CD14-positive monocyte (primary cell): ENCODE measurements at regions of chr12 and their contacts with region 1.

Region 1: GRCh38 chr12:14629832-14630710 is 62.4 kb upstream of the PLBD1 start:
- DNase-seq: peak; percentile 42 to 73 (median 65)
- H3K4me3 ChIP-seq: no peak overlapping the region
- H3K4me3 Mint-ChIP-seq: no peak overlapping the region
- H3K27ac ChIP-seq: no peak overlapping the region
- H3K27ac Mint-ChIP-seq: no peak overlapping the region
- H3K4me1 ChIP-seq: no peaks in the 10 kb centered on the region
- H3K4me1 Mint-ChIP-seq: peaks cover 4% of the 10 kb centered on the region
- H3K27me3 ChIP-seq: no peaks in the 10 kb centered on the region
- H3K27me3 Mint-ChIP-seq: peaks cover 0 to 7% (median 1%) of the 10 kb centered on the region in 3 donors
- CTCF ChIP-seq: peak; percentile 97

Region 2: DNA sequence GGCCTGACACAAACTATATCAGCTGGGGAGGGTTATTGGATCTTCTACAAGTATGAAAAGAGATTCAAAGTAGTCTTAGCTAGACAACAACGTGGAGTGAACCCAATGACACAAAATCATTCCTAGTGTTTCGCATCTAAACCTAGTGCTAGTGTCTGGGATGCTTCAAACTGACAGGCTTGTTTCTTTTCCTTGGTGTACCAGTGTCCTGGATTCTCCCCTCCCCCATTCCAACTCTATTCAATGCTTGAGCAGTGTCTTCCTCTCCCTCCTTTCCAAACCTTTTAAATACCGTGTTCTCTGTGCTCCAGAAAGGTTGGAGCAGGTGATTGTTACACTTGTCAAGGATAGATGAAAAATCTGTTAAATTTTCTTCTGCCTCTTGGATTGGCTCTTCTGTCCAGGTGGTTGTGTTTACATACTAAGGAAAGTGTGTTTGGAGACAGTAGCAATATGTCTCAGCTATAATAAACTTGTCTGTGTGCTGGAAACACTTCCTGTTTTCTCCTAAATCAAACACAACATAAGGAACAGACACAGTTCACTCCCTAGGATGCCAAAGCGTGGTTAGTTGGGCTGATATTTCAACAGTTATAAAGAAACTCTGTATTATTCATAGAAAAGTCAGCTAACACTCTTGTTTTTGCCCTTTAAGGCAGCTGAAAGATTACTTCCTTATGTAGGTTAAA is 80.7 kb after region 1 on chr12:
- intact Hi-C with region 1: loop called (anchors 5 kb)
- DNase-seq: no peak
- H3K4me3 ChIP-seq: no peak overlapping the region
- H3K4me3 Mint-ChIP-seq: no peak overlapping the region
- H3K27ac ChIP-seq: no peak overlapping the region
- H3K27ac Mint-ChIP-seq: no peak overlapping the region
- H3K4me1 ChIP-seq: no peaks in the 10 kb centered on the region
- H3K4me1 Mint-ChIP-seq: peaks cover 5% of the 10 kb centered on the region
- H3K27me3 ChIP-seq: no peaks in the 10 kb centered on the region
- H3K27me3 Mint-ChIP-seq: peaks cover 21 to 35% (median 22%) of the 10 kb centered on the region in 3 donors
- CTCF ChIP-seq: no peak

Region 3: DNA sequence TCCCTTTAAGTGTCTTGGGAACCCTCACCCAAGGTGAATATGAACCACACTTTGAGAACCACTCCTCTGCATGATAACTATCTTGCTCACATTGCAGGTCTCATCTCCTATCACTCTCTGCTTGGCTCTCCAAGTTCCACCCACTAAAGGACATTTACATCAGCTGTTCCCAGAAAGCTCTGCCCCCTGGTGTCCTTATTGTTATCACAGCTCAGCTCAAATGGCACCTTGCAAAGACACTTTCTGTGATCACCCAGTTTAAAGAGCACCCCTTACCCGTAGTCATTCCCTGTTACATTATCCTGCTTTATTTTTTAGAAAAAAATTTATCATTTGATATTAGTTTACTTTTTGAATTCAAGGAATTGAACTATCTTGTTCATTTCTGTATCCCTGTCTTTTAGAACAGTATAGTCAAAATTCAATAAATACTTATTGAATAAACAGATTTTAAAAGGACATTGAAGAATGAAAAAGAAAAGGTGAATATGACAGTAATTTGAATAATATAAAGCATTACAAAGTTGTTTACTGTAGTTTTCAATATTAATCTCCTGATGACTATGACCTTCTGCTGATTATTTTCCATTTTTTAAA is 86.9 kb after region 1 on chr12:
- intact Hi-C with region 1: loop called (anchors 5 kb)
- DNase-seq: peak; percentile 44 to 58 (median 58)
- H3K4me3 ChIP-seq: no peak overlapping the region
- H3K4me3 Mint-ChIP-seq: no peak overlapping the region
- H3K27ac ChIP-seq: no peak overlapping the region
- H3K27ac Mint-ChIP-seq: no peak overlapping the region
- H3K4me1 ChIP-seq: no peaks in the 10 kb centered on the region
- H3K4me1 Mint-ChIP-seq: no peaks in the 10 kb centered on the region
- H3K27me3 ChIP-seq: no peaks in the 10 kb centered on the region
- H3K27me3 Mint-ChIP-seq: peaks cover 4 to 7% (median 7%) of the 10 kb centered on the region in 3 donors
- CTCF ChIP-seq: peak; percentile 81